ENCODE measurements at regions of chr1 and their contacts with region 1.

Region 1: GRCh38 chr1:18417316-18418269 is 63.1 kb upstream of the KLHDC7A start:
- DNase-seq: no peak
- H3K4me3 ChIP-seq: no peak overlapping the region
- H3K27ac ChIP-seq: no peak overlapping the region
- H3K4me1 ChIP-seq: peaks cover 8 to 22% (median 14%) of the 10 kb centered on the region in 4 experiments
- H3K27me3 ChIP-seq: no peaks in the 10 kb centered on the region
- CTCF ChIP-seq: no peak
- EP300 ChIP-seq: no peak
- POLR2A ChIP-seq: no peak
- RAD21 ChIP-seq: no peak

Region 2: DNA sequence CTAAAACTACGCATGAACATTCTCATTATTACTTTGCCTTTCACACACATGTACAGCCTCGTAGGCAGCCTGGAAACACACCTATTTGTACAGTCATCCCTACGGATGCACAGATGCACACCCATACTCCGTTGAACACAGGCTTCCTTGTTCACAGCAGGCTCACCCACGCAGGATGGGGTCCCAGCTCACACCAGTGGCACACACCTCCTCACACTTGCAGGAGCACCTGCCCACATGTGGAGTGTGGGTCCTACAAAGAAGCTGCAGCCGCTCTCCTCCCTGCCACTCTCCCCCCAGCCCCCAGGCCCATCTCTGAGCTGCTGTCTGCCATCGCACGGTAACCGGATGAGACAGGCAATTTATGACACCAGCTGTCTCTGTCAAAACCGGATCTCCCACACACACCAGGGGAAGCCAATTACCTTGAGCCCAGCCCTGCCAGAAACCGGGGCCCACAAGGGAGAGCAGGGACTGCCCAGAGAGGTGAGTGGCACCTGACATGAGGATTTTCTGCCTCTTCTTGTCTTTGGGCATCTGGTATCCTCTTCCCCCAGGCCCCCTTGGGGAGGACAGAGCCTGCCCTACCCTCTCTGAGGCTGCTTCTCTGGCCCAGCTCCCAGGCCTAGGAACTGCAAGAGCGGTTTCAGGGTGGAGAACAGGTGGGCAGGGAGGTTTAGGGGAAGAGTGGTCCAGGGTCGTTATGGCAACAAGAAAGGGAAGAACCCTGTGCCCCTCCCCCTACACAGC is 134.6 kb before region 1 on chr1:
- CTCF ChIA-PET with region 1: no interaction called
- POLR2A ChIA-PET with region 1: no interaction called
- DNase-seq: peak in 1 of 2 experiments; percentile 85
- H3K4me3 ChIP-seq: no peak overlapping the region
- H3K27ac ChIP-seq: no peak overlapping the region
- H3K4me1 ChIP-seq: peaks cover 13 to 31% (median 21%) of the 10 kb centered on the region in 4 experiments
- H3K27me3 ChIP-seq: no peaks in the 10 kb centered on the region
- CTCF ChIP-seq: no peak
- EP300 ChIP-seq: peak in 1 of 2 experiments; percentile 34; a peak in 1 of 3 replicates
- POLR2A ChIP-seq: no peak
- RAD21 ChIP-seq: no peak

Region 3: GRCh38 chr1:18434041-18434440 is 16.4 kb after region 1 on chr1:
- CTCF ChIA-PET with region 1: interaction called, 4 read pairs
- POLR2A ChIA-PET with region 1: interaction called, 10 read pairs
- DNase-seq: no peak
- H3K4me3 ChIP-seq: no peak overlapping the region
- H3K27ac ChIP-seq: no peak overlapping the region
- H3K4me1 ChIP-seq: no peaks in the 10 kb centered on the region; a peak in 1 of 7 replicates
- H3K27me3 ChIP-seq: no peaks in the 10 kb centered on the region; a peak in 2 of 7 replicates
- CTCF ChIP-seq: no peak
- EP300 ChIP-seq: no peak
- POLR2A ChIP-seq: no peak
- RAD21 ChIP-seq: no peak

Region 4: DNA sequence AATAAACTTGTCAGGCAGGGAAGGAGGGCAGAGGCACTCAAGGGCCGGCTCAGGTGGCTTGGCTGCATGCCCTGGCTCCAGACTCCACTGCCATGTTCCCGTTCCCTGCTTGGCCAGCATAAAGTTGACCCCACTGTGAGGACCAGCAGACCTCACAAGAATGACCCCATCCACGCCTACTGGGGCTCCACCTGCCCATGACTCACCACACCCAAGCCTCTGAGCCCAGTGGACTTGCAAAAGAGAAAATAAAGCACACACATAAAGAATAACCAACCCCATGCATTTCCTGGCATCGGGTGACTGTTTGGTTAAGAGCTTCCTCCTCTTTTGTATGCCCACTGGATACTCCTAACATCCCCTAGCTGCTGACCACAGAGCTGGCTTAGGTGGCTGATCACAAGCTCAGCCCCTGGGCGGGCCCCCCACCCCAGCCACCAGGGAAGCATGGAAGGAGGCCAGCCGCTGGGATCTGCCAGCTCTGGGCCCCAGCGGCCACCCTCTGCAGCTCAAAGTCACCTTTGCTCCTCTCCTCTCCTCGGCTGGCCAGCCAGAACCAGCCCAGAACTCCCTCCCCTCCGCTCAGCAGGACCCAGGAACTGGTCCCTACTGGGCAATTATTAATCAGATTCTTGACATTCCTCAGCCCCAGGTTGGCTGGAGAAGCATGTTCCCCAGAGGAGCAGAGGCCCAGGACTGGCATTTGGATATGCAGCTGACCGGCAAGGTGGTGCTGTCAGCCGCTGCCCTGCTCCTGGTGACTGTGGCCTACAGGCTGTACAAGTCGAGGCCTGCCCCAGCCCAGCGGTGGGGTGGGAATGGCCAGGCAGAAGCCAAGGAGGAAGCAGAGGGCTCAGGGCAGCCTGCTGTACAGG is 63.0 kb after region 1 on chr1 and contains the start of gene KLHDC7A:
- CTCF ChIA-PET with region 1: interaction called, 3 read pairs
- POLR2A ChIA-PET with region 1: interaction called, 11 read pairs
- DNase-seq: peak; percentile 75 to 79
- H3K4me3 ChIP-seq: peak within 1 kb of the TSS in 1 of 4 experiments; percentile 29; a peak in 2 of 8 replicates
- H3K27ac ChIP-seq: peak within 1 kb of the TSS; percentile 71; the same call in 1 of the 2 replicates
- H3K4me1 ChIP-seq: peaks cover 17 to 26% (median 19%) of the 10 kb centered on the region in 4 experiments
- H3K27me3 ChIP-seq: no peaks in the 10 kb centered on the region; a peak in 1 of 7 replicates
- CTCF ChIP-seq: no peak
- EP300 ChIP-seq: peak in 1 of 2 experiments; percentile 94; a peak in 2 of 3 replicates
- POLR2A ChIP-seq: peak; percentile 72 to 75; a peak in 2 of 3 replicates
- RAD21 ChIP-seq: peak; percentile 2 to 21; a peak in 1 of 4 replicates
- total RNA-seq, gene KLHDC7A: 18.9 and 19.1 TPM in 2 replicates

Region 5: DNA sequence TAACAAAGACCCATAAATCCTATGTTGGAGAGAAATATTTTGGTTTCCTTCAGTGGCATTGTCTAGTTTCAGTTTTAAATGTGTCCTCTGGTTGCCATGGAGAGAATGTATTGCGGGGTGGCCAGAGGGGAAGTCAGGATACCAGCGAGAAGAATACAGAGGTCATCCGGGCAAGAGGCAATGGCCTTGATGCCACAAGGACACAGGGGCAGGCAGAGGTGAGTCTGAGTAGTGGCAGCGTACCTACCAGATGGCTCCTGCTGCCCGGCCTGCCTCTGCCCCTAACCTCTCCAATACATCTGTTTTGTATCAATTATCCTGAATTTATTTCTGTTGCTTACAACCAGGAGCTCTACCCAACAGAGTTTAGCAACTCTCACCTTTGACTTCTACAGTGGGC is 78.0 kb after region 1 on chr1:
- CTCF ChIA-PET with region 1: no interaction called
- POLR2A ChIA-PET with region 1: no interaction called
- DNase-seq: no peak
- H3K4me3 ChIP-seq: no peak overlapping the region
- H3K27ac ChIP-seq: no peak overlapping the region
- H3K4me1 ChIP-seq: no peaks in the 10 kb centered on the region
- H3K27me3 ChIP-seq: no peaks in the 10 kb centered on the region; a peak in 1 of 7 replicates
- CTCF ChIP-seq: no peak
- EP300 ChIP-seq: no peak
- POLR2A ChIP-seq: no peak
- RAD21 ChIP-seq: no peak